Caco-2 (cell line): ENCODE measurements at regions of chr11 and their contacts with region 1.

Region 1: DNA sequence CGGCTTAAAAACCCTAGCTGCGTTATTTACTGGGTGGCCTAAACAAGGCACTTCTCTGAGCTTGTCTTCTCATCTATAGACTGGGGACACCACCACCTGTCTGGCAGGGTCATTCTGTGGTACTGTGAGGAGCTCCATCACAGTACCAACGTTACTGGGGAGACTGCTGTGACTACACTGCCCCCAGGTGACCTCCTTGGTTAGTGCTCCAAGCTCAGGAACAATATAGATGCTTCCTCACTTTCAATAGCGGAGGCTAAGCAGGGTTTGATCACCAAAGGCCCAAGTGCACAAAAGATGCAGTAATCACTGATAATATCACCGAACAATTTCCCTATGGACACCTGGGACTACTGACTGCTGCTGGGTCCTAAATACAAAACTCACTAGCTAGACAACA is 18.8 kb downstream of the PRPF19 start:
- DNase-seq: peak; percentile 67 to 75
- H3K4me3 ChIP-seq: no peak overlapping the region
- H3K4me3 Mint-ChIP-seq: no peak overlapping the region
- H3K27ac Mint-ChIP-seq: no peak overlapping the region
- H3K4me1 ChIP-seq: no peaks in the 10 kb centered on the region
- H3K4me1 Mint-ChIP-seq: peaks cover 7% of the 10 kb centered on the region
- H3K27me3 ChIP-seq: no peaks in the 10 kb centered on the region
- H3K27me3 Mint-ChIP-seq: no peaks in the 10 kb centered on the region
- CTCF ChIP-seq: peak; percentile 72 to 87

Region 2: GRCh38 chr11:60657888-60658287 is 229.7 kb before region 1 on chr11:
- CTCF ChIA-PET with region 1: interaction called, 13 read pairs
- POLR2A ChIA-PET with region 1: no interaction called
- intact Hi-C with region 1: no loop called
- DNase-seq: peak in 1 of 2 experiments; percentile 20
- H3K4me3 ChIP-seq: no peak overlapping the region
- H3K4me3 Mint-ChIP-seq: no peak overlapping the region
- H3K27ac Mint-ChIP-seq: no peak overlapping the region
- H3K4me1 ChIP-seq: no peaks in the 10 kb centered on the region
- H3K4me1 Mint-ChIP-seq: peaks cover 17% of the 10 kb centered on the region
- H3K27me3 ChIP-seq: no peaks in the 10 kb centered on the region
- H3K27me3 Mint-ChIP-seq: peaks cover 4% of the 10 kb centered on the region
- CTCF ChIP-seq: peak; percentile 14 to 24

Region 3: DNA sequence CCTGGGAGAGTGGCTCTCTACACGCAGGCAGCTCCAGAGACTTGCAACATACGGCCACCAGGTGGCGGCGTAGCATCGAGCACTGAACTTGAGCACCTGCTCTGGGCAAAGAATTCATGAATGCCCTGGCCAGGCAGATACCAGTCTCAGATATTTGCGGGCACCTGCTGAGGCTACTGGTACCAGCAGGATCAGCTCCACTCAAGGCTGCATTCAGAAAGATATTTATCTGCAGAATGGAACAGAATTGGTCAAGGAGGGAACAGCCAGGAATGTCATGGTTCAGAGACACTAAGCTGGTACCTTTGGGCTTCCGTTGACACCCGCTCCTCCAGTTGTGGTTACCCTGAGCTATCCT is 56.4 kb before region 1 on chr11:
- CTCF ChIA-PET with region 1: interaction called, 200 read pairs
- POLR2A ChIA-PET with region 1: no interaction called
- intact Hi-C with region 1: loop called (anchors 1 kb)
- DNase-seq: peak; percentile 70 to 83
- H3K4me3 ChIP-seq: no peak overlapping the region
- H3K4me3 Mint-ChIP-seq: no peak overlapping the region
- H3K27ac Mint-ChIP-seq: no peak overlapping the region
- H3K4me1 ChIP-seq: no peaks in the 10 kb centered on the region
- H3K4me1 Mint-ChIP-seq: no peaks in the 10 kb centered on the region
- H3K27me3 ChIP-seq: no peaks in the 10 kb centered on the region
- H3K27me3 Mint-ChIP-seq: peaks cover 3% of the 10 kb centered on the region
- CTCF ChIP-seq: peak; percentile 92 to 94

Region 4: GRCh38 chr11:60852129-60852981 is 35.2 kb before region 1 on chr11:
- CTCF ChIA-PET with region 1: interaction called, 16 read pairs
- POLR2A ChIA-PET with region 1: interaction called, 4 read pairs
- intact Hi-C with region 1: no loop called
- DNase-seq: peak; percentile 58 to 67
- H3K4me3 ChIP-seq: peak overlapping the region; percentile 57
- H3K4me3 Mint-ChIP-seq: peak overlapping the region; percentile 67
- H3K27ac Mint-ChIP-seq: peak overlapping the region; percentile 33
- H3K4me1 ChIP-seq: peaks cover 20% of the 10 kb centered on the region
- H3K4me1 Mint-ChIP-seq: peaks cover 9% of the 10 kb centered on the region
- H3K27me3 ChIP-seq: no peaks in the 10 kb centered on the region
- H3K27me3 Mint-ChIP-seq: no peaks in the 10 kb centered on the region
- CTCF ChIP-seq: no peak

Region 5: GRCh38 chr11:60899046-60899936 is 11.7 kb after region 1 on chr11:
- CTCF ChIA-PET with region 1: interaction called, 29 read pairs
- POLR2A ChIA-PET with region 1: interaction called, 3 read pairs
- intact Hi-C with region 1: no loop called
- DNase-seq: peak in 1 of 2 experiments; percentile 71
- H3K4me3 ChIP-seq: no peak overlapping the region
- H3K4me3 Mint-ChIP-seq: no peak overlapping the region
- H3K27ac Mint-ChIP-seq: no peak overlapping the region
- H3K4me1 ChIP-seq: no peaks in the 10 kb centered on the region
- H3K4me1 Mint-ChIP-seq: no peaks in the 10 kb centered on the region
- H3K27me3 ChIP-seq: no peaks in the 10 kb centered on the region
- H3K27me3 Mint-ChIP-seq: no peaks in the 10 kb centered on the region
- CTCF ChIP-seq: peak; percentile 92 to 95

Region 6: DNA sequence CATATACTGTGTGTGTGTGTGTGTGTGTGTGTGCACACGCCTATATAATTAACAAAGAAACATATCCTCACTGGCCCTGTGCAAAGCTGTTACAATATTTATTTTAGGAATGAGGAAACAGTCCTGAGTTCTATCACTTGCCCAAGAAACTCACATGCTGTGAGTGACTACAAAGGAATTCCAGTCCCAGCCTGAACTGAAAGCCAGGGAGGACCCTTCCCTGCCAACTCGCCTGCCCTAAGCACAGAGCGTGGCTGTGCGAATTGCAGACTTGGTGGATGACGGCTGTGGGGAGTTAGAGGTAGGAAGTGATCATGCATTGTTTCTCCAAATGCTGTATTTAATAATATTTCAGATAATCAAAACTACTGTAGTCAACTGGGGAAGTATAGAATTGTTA is 188.3 kb after region 1 on chr11:
- CTCF ChIA-PET with region 1: no interaction called
- POLR2A ChIA-PET with region 1: no interaction called
- intact Hi-C with region 1: no loop called
- DNase-seq: peak; percentile 55 to 62
- H3K4me3 ChIP-seq: no peak overlapping the region
- H3K4me3 Mint-ChIP-seq: no peak overlapping the region
- H3K27ac Mint-ChIP-seq: no peak overlapping the region
- H3K4me1 ChIP-seq: no peaks in the 10 kb centered on the region
- H3K4me1 Mint-ChIP-seq: no peaks in the 10 kb centered on the region
- H3K27me3 ChIP-seq: no peaks in the 10 kb centered on the region
- H3K27me3 Mint-ChIP-seq: no peaks in the 10 kb centered on the region
- CTCF ChIP-seq: no peak